ENCODE measurements at regions of chr2 and their contacts with region 1.

Region 1: DNA sequence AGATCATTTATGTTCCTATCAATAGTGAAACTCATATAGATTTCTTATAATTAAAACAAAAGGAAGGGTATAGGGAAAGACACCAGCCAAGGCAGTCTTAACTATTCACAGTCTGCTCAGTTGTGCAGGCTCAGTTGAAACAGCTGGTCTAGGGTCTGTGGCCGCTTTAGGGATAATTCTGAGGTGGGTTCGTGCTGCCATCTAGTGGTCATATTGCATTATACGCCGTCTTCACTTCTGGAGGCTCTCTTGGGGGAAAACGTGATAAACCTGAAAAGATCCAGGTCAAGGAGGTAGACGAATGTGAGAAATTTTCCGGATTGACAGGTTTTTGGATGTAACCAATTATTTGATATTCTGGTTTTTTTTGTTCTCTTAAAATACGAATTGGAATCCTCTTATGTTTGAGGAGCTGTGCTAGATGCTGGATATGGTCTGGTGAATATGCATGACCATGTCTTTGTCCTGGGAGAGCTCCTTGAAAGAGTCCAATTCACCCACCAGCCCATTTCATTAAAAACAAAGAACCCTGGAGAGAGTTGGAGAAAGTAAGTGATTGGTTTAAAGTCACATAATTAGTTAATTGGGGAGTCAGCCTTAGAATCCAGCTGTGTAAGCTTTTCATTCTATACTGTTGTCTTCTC is 492.4 kb downstream of the PLCL1 start:
- DNase-seq: peak; percentile 74
- H3K4me3 ChIP-seq: no peak overlapping the region
- H3K27ac ChIP-seq: no peak overlapping the region
- H3K4me1 ChIP-seq: peaks cover 6% of the 10 kb centered on the region
- CTCF ChIP-seq: peak; percentile 84

Region 2: DNA sequence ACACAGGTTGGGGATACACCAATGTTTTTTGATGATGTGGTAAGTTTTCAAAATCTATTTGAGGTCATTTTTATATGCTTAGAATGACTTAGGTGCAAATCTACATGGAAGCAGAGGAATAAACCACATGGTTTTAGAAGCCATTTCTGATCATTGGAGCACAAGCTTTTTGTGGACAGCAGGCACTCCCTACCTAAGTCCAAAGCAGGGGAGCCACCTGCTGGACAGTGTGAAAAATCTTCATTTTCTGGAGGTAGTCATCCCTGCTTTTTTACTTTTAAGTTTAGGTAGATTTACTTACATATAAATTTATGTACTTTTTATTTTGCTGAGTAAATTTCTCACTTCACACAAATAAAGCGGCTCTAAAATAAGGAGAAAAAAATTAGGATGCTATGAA is 169.2 kb before region 1 on chr2:
- CTCF ChIA-PET with region 1: no interaction called
- POLR2A ChIA-PET with region 1: interaction called, 3 read pairs
- intact Hi-C with region 1: loop called (anchors 10 kb)
- DNase-seq: peak; percentile 53
- H3K4me3 ChIP-seq: no peak overlapping the region
- H3K27ac ChIP-seq: no peak overlapping the region
- H3K4me1 ChIP-seq: no peaks in the 10 kb centered on the region
- CTCF ChIP-seq: peak; percentile 85

Measured in OCI-LY7 (cell line).